ENCODE measurements at regions of chr1 and their contacts with region 1.

Region 1: GRCh38 chr1:67853704-67854103 is 20.4 kb upstream of the GNG12 start:
- DNase-seq: peak; percentile 59 to 84 (median 82)
- ATAC-seq: peak; percentile 58 to 76
- H3K4me3 ChIP-seq: no peak overlapping the region
- H3K27ac ChIP-seq: no peak overlapping the region
- H3K4me1 ChIP-seq: peaks cover 2% of the 10 kb centered on the region
- H3K27me3 ChIP-seq: no peaks in the 10 kb centered on the region

Region 2: GRCh38 chr1:67897270-67897949 is 43.7 kb after region 1 on chr1:
- intact Hi-C with region 1: no loop called
- DNase-seq: no peak
- ATAC-seq: no peak
- H3K4me3 ChIP-seq: no peak overlapping the region
- H3K27ac ChIP-seq: no peak overlapping the region
- H3K4me1 ChIP-seq: no peaks in the 10 kb centered on the region
- H3K27me3 ChIP-seq: no peaks in the 10 kb centered on the region

Region 3: GRCh38 chr1:68010090-68010489 is 156.4 kb after region 1 on chr1:
- intact Hi-C with region 1: loop called in 2 of 4 experiments (anchors 5 to 10 kb)
- DNase-seq: no peak
- ATAC-seq: no peak
- H3K4me3 ChIP-seq: no peak overlapping the region
- H3K27ac ChIP-seq: no peak overlapping the region
- H3K4me1 ChIP-seq: no peaks in the 10 kb centered on the region
- H3K27me3 ChIP-seq: no peaks in the 10 kb centered on the region

Region 4: GRCh38 chr1:68103884-68104554 is 250.3 kb after region 1 on chr1:
- intact Hi-C with region 1: loop called in 1 of 4 experiments (anchors 5 kb)
- DNase-seq: no peak
- ATAC-seq: no peak
- H3K4me3 ChIP-seq: no peak overlapping the region
- H3K27ac ChIP-seq: no peak overlapping the region
- H3K4me1 ChIP-seq: no peaks in the 10 kb centered on the region
- H3K27me3 ChIP-seq: no peaks in the 10 kb centered on the region

Region 5: GRCh38 chr1:68111519-68112436 is 258.1 kb after region 1 on chr1:
- intact Hi-C with region 1: loop called (anchors 2 to 5 kb)
- DNase-seq: peak; percentile 62 to 87 (median 87)
- ATAC-seq: peak; percentile 84 to 91
- H3K4me3 ChIP-seq: no peak overlapping the region
- H3K27ac ChIP-seq: no peak overlapping the region
- H3K4me1 ChIP-seq: peaks cover 7% of the 10 kb centered on the region
- H3K27me3 ChIP-seq: no peaks in the 10 kb centered on the region

Region 6: DNA sequence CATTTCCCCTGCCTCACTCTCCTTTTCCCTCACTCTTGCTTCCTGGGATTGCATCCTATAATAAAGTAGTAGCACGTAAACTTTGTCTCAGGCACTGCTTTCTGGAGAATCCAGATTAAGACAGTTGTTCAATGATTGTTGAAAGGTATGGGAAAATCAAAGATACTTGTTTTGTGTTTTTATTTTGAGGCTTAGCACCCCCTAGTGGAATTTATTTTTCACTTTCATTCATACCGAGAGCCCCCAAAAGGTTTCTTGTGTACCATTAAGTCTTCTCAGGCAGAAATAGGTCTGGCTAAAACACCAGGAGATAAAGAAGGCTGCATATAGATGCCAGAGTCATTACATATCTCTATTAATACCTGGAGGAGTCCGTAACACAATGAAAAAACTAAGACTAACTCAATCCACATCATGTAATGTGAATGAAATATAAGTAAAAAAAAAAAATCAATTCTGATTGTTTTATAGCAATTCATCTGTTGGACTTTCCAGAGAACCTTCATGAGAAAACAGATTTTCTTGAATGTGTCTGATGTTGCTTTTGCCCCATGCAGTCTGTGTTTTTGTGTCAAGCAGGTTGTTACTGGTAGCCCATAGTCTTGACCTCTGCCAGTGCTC is 492.6 kb after region 1 on chr1:
- intact Hi-C with region 1: loop called in 2 of 4 experiments (anchors 10 kb)
- DNase-seq: no peak
- ATAC-seq: no peak
- H3K4me3 ChIP-seq: no peak overlapping the region
- H3K27ac ChIP-seq: no peak overlapping the region
- H3K4me1 ChIP-seq: no peaks in the 10 kb centered on the region
- H3K27me3 ChIP-seq: no peaks in the 10 kb centered on the region

Measured in right cardiac atrium (tissue), 5 donors.